Activated naive CD4-positive, alpha-beta T cell treated with anti-CD3 and anti-CD28 coated beads, Interleukin-2, amount 10 ng/mL, durations not matched to agents 7 days and 5 days (primary cell): ENCODE measurements at regions of chr2 and their contacts with region 1.

Region 1: GRCh38 chr2:86764661-86765307 is 25.9 kb downstream of the CD8A start:
- DNase-seq: peak; percentile 50
- H3K4me3 Mint-ChIP-seq: no peak overlapping the region
- H3K27ac Mint-ChIP-seq: no peak overlapping the region
- H3K4me1 Mint-ChIP-seq: no peaks in the 10 kb centered on the region
- H3K27me3 Mint-ChIP-seq: no peaks in the 10 kb centered on the region

Region 2: GRCh38 chr2:86781363-86781762 is 16.6 kb after region 1 on chr2:
- CTCF ChIA-PET with region 1: interaction called, 11 read pairs
- DNase-seq: no peak
- H3K4me3 Mint-ChIP-seq: no peak overlapping the region
- H3K27ac Mint-ChIP-seq: no peak overlapping the region
- H3K4me1 Mint-ChIP-seq: no peaks in the 10 kb centered on the region
- H3K27me3 Mint-ChIP-seq: peaks cover 22% of the 10 kb centered on the region

Region 3: GRCh38 chr2:86808315-86809161 is 43.8 kb after region 1 on chr2:
- CTCF ChIA-PET with region 1: interaction called, 20 read pairs
- DNase-seq: peak; percentile 93
- H3K4me3 Mint-ChIP-seq: peak overlapping the region; percentile 77
- H3K27ac Mint-ChIP-seq: no peak overlapping the region
- H3K4me1 Mint-ChIP-seq: peaks cover 22% of the 10 kb centered on the region
- H3K27me3 Mint-ChIP-seq: peaks cover 68% of the 10 kb centered on the region